ENCODE measurements at regions of chr19 and their contacts with region 1.

Region 1: GRCh38 chr19:54239051-54239450 is 3.5 kb downstream of the LILRA6 start:
- DNase-seq: no peak
- ATAC-seq: no peak

Region 2: DNA sequence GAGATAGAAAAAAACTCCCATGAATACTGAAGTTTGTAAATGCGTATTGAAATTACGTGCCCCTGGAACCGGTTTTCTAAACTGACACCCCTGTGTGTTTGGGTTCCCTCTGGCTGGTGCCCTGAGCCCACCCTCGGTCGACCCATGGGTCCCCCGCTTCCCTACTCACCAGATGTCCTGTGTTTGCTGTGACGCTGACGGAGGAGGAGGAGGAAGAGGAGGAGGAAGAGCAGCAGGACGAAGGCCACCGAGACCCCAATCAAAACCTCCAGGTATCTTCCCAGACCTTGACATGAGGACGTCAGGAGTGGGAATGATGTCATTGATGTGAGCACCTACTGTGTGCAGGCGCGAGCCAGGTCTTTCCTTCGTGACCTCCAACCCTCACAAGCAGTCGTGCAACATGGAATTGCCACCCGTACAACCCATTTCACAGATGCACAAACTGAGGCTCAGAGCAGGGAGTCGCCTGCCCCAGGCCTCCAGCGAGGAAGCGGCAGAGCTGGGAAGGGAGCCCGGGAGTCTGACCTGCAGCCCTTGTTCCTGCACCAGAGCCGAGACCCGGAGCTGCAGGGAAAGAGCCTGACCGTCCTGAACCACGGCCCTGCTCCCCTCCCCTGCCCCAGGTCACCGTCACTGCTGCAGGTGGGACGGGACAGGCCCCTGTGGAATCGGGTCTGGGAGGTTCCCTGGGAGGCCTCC is 19.9 kb before region 1 on chr19:
- intact Hi-C with region 1: loop called in 1 of 2 experiments (anchors 2 kb)
- DNase-seq: no peak
- ATAC-seq: no peak

Region 3: DNA sequence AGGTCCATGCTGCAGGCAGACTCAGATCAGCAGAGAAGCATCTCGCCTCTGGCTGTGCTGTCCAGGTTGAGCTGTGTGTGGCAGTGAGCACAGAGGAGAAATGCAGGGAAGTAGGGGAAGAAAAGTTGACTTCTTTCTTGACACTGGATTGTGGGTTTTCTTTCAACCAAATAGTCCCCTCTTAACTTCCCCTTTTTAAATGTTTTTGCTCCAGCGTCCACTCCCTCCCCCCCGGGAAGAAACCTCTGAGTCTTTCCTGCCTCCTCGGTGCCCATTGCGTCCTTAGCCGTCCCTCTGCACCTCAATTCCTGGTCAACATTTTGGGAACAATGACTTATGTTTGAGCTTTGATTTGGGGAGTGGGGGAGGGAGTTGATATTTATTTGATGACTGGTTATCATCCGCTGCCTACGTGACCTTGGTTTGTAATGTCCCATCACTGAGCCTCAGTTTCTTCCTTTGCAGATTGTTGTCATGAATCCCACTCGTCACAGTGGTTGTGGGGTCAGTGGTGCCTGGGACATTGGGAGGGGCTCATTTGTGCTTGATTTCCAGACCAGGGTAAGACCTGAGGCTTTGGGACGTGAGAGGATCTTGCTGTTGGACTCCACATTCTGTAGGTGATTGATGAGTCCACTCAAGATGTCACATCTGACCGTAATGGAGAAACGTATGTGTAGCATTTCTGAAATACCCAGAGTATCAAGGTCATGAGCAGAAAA is 42.1 kb after region 1 on chr19 and contains the start of gene LILRB2:
- intact Hi-C with region 1: no loop called
- DNase-seq: no peak
- ATAC-seq: peak in 1 of 2 donors; percentile 34
- total RNA-seq, gene LILRB2: 3.3 to 5.5 TPM

Region 4: GRCh38 chr19:54325194-54325621 is 86.2 kb after region 1 on chr19:
- intact Hi-C with region 1: no loop called
- DNase-seq: no peak
- ATAC-seq: peak in 1 of 2 donors; percentile 39

Measured in left cardiac atrium (tissue), 4 donors.